GM12878 (cell line): ENCODE measurements at regions of chr11 and their contacts with region 1.

Region 1: GRCh38 chr11:73236854-73237253 is 18.8 kb downstream of the P2RY2 start:
- DNase-seq: no peak
- ATAC-seq: peak; percentile 84
- H3K4me3 ChIP-seq: no peak overlapping the region
- H3K27ac ChIP-seq: no peak overlapping the region
- H3K4me1 ChIP-seq: peaks cover 2% of the 10 kb centered on the region
- H3K27me3 ChIP-seq: no peaks in the 10 kb centered on the region
- CTCF ChIP-seq: peak; percentile 69 to 82 (median 72)
- EP300 ChIP-seq: no peak
- POLR2A ChIP-seq: no peak
- RAD21 ChIP-seq: peak; percentile 76

Region 2: DNA sequence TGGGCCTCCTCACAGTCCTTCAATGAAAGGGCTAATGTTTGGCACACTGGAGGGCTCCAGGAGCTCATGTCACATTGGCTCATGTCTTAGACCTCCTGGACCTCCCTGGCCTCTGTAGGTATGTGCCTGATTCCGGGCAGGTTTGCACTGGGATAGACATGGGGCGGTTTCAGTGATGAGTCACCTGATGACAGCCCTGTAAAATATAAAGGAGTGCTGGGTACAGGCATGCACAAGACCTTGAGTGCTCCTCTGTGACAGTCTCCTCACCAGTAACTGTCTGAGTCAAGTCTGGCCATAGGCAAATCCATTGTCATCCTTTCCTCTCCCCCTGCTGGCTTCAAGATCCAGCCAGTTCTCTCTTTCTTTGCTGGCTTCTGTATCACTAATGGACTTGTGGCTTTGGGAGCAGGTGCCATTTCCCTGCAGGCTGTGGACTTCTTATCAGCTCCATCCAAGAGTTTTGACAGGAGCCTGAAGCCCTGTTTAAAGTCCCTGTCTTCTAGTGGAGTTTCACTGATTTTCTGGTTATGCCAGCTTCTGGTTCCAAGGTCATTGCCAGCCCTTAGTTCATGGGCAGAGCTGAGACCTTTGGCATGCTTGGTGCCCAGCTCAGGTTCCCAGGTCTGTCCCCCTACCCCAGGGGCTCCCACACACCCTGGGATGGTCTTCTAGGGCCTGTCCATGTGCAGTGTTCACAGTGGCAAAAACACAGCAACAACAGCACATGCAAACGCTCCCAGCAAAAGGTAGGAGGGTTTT is 41.4 kb before region 1 on chr11:
- CTCF ChIA-PET with region 1: interaction called, 20 read pairs
- POLR2A ChIA-PET with region 1: no interaction called
- RAD21 ChIA-PET with region 1: interaction called, 10 read pairs
- SMC1A ChIA-PET with region 1: interaction called, 188 read pairs
- in situ Hi-C with region 1: no loop called
- intact Hi-C with region 1: no loop called
- DNase-seq: no peak
- ATAC-seq: no peak
- H3K4me3 ChIP-seq: no peak overlapping the region
- H3K27ac ChIP-seq: no peak overlapping the region
- H3K4me1 ChIP-seq: peaks cover 19% of the 10 kb centered on the region
- H3K27me3 ChIP-seq: no peaks in the 10 kb centered on the region; a peak in 1 of 4 replicates
- CTCF ChIP-seq: no peak
- EP300 ChIP-seq: no peak
- POLR2A ChIP-seq: no peak
- RAD21 ChIP-seq: no peak

Region 3: DNA sequence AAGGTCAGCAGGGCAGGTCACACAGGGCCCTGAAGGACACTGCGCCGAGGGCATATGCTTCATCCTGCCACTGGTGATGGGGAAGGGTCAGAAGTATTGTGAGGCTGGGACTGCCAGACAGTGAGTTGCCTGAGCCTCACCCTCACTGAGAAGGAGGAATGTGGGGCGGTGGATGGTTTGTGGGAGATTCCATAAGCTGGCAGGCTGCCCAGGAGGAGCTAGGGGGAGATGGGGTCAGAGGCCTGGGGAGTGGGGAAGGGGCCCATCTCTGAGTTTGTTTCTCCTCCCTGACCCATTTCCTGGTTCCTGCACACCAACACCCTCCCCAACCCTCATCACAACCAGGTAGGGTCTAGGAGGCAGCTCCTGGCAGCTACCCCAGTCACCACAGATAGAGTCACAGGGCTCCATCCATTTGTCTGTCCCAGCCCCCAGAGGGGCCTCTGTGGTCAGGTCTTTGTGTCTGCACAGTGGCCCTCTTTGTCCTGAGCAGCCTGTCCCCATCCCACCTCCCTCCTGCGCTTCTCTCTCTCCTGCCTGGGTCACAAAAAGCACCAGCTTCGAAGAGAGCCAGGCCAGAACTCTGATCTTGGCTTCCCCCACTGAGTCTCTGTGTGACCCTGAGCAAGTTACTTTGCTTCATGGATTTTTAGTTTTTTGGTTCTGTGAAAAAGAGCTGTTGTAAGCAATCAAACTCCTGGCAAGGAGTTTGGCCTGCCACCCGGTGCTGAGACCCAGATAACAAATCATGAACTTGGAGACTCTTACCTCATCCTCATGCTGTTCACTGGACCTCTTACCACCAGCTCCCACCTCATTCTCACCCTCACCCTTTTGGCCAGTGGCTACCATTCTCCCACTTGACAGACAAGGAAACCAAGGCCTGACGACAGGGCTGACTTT is 23.4 kb before region 1 on chr11:
- CTCF ChIA-PET with region 1: interaction called, 14 read pairs
- POLR2A ChIA-PET with region 1: interaction called, 3 read pairs
- RAD21 ChIA-PET with region 1: no interaction called
- SMC1A ChIA-PET with region 1: interaction called, 6 read pairs
- in situ Hi-C with region 1: no loop called
- intact Hi-C with region 1: no loop called
- DNase-seq: no peak
- ATAC-seq: no peak
- H3K4me3 ChIP-seq: no peak overlapping the region
- H3K27ac ChIP-seq: no peak overlapping the region
- H3K4me1 ChIP-seq: peaks cover 12% of the 10 kb centered on the region
- H3K27me3 ChIP-seq: no peaks in the 10 kb centered on the region; a peak in 1 of 4 replicates
- CTCF ChIP-seq: no peak
- EP300 ChIP-seq: no peak
- POLR2A ChIP-seq: no peak
- RAD21 ChIP-seq: no peak

Region 4: DNA sequence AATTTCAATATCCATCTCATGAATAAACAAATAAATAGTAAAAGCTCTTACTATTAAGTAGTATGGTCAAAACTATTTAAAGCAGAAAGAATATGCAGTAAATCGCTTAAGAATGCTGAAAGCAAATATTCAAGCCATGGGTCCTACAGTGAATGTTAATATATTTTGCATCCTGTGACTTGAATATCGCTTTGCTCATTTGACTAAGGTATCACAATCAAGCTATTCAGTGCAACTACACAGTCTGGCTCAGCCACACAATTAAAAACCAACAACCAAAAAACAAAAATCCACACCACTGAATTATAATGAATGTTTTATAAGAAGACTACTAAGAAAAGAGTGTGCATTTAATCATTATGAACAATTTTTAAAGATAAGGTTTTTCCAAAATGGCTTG is 478.7 kb after region 1 on chr11:
- CTCF ChIA-PET with region 1: no interaction called
- POLR2A ChIA-PET with region 1: no interaction called
- RAD21 ChIA-PET with region 1: no interaction called
- SMC1A ChIA-PET with region 1: no interaction called
- in situ Hi-C with region 1: no loop called
- intact Hi-C with region 1: no loop called
- DNase-seq: no peak
- ATAC-seq: no peak
- H3K4me3 ChIP-seq: no peak overlapping the region
- H3K27ac ChIP-seq: no peak overlapping the region
- H3K4me1 ChIP-seq: peaks cover 5% of the 10 kb centered on the region
- H3K27me3 ChIP-seq: no peaks in the 10 kb centered on the region
- CTCF ChIP-seq: no peak
- EP300 ChIP-seq: no peak
- POLR2A ChIP-seq: no peak
- RAD21 ChIP-seq: no peak